H1 (cell line): ENCODE measurements at regions of chr10 and their contacts with region 1.

Region 1: DNA sequence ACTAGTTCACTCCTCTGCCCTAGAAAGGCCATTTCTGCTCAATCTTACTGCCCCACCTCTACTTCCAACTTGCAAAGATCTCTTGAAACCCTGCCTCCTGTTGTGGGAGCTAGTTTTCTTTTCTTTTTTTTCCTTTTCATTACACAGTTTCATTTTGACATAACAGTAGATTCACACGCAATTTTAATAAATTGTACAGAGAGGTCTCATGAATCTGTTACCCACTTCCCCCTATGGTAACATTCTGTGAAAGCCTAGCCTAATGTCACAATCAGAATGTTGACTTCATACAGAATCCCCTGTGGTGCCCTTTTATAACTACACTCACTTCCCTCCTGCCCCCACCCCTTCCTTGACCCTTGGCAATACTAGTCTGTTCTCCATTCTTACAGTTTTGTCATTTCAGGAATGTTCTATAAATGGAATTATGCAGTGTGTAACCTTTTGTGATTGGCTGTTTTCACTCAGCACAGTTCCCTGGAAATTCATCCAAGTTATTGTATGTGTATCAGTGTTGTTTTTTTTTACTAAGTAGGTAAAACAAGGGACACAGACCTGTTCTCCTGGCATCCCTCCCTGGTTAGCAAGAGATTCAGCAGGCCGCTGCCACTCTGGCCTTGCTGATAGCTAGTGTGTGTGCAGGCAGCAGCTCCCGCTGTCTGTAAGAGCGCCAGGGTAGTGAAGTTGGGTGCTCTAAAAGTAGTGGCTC is 21.5 kb downstream of the CHST3 start:
- DNase-seq: no peak
- H3K4me3 ChIP-seq: no peak overlapping the region
- H3K27ac ChIP-seq: no peak overlapping the region
- H3K4me1 ChIP-seq: peaks cover 0 to 3% (median 1%) of the 10 kb centered on the region in 4 experiments; a peak in 1 of 7 replicates
- H3K27me3 ChIP-seq: no peaks in the 10 kb centered on the region
- CTCF ChIP-seq: no peak
- EP300 ChIP-seq: no peak
- POLR2A ChIP-seq: no peak
- RAD21 ChIP-seq: no peak

Region 2: GRCh38 chr10:71974489-71975021 is 11.1 kb before region 1 on chr10:
- CTCF ChIA-PET with region 1: interaction called, 23 read pairs
- POLR2A ChIA-PET with region 1: no interaction called
- DNase-seq: no peak
- H3K4me3 ChIP-seq: no peak overlapping the region
- H3K27ac ChIP-seq: no peak overlapping the region
- H3K4me1 ChIP-seq: peaks cover 0 to 15% (median 4%) of the 10 kb centered on the region in 4 experiments; a peak in 4 of 7 replicates
- H3K27me3 ChIP-seq: no peaks in the 10 kb centered on the region
- CTCF ChIP-seq: no peak
- EP300 ChIP-seq: no peak
- POLR2A ChIP-seq: no peak
- RAD21 ChIP-seq: no peak

Region 3: DNA sequence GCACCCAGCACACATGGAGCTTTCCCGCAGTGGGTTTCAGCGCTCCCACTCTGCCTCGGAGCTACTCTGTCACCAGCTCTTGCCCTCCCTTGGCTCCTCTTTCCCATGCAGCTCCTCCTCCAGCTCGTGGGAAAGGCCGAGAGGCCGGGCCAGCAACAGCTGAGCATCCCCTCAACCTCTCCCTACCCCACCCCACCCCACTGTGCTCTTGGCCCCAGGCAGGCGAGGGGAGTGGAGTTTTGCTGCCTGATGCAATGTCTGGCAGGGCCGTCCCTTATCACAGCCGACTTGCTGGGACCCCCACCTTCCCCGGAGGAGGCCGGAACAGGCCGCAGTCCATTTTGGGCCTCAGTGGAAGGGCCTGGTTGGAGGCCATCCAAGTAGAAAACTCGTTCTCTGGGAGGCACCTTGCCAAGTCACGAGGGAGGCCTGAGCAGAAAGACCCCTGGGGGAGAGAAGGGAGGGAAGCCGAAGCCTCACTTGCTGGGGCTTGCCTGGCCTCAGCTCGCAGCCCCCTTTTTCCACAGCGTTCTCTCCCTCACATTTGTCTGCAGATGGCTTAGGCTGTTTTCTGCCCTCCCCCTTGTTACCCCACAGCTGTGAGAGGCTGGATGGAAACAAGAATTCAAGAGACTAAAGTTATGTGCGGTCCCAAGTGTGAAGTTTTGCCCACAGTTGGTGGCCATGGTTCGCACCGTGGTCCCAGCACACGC is 13.8 kb after region 1 on chr10:
- CTCF ChIA-PET with region 1: interaction called, 24 read pairs
- POLR2A ChIA-PET with region 1: interaction called, 3 read pairs
- DNase-seq: no peak
- H3K4me3 ChIP-seq: no peak overlapping the region
- H3K27ac ChIP-seq: no peak overlapping the region
- H3K4me1 ChIP-seq: peaks cover 0 to 8% (median 1%) of the 10 kb centered on the region in 4 experiments; a peak in 3 of 7 replicates
- H3K27me3 ChIP-seq: no peaks in the 10 kb centered on the region
- CTCF ChIP-seq: no peak
- EP300 ChIP-seq: no peak
- POLR2A ChIP-seq: no peak
- RAD21 ChIP-seq: no peak

Region 4: GRCh38 chr10:72016608-72017312 is 31.1 kb after region 1 on chr10:
- CTCF ChIA-PET with region 1: interaction called, 12 read pairs
- POLR2A ChIA-PET with region 1: no interaction called
- DNase-seq: no peak
- H3K4me3 ChIP-seq: no peak overlapping the region
- H3K27ac ChIP-seq: no peak overlapping the region
- H3K4me1 ChIP-seq: peaks cover 0 to 4% (median under 1%) of the 10 kb centered on the region in 4 experiments; a peak in 2 of 7 replicates
- H3K27me3 ChIP-seq: no peaks in the 10 kb centered on the region
- CTCF ChIP-seq: no peak
- EP300 ChIP-seq: no peak
- POLR2A ChIP-seq: no peak
- RAD21 ChIP-seq: no peak

Region 5: GRCh38 chr10:72158176-72158575 is 172.5 kb after region 1 on chr10:
- CTCF ChIA-PET with region 1: no interaction called
- POLR2A ChIA-PET with region 1: no interaction called
- DNase-seq: no peak
- H3K4me3 ChIP-seq: no peak overlapping the region
- H3K27ac ChIP-seq: no peak overlapping the region
- H3K4me1 ChIP-seq: no peaks in the 10 kb centered on the region
- H3K27me3 ChIP-seq: no peaks in the 10 kb centered on the region
- CTCF ChIP-seq: no peak
- EP300 ChIP-seq: no peak
- POLR2A ChIP-seq: no peak
- RAD21 ChIP-seq: no peak